ENCODE measurements at regions of chr1 and their contacts with region 1.

Region 1: DNA sequence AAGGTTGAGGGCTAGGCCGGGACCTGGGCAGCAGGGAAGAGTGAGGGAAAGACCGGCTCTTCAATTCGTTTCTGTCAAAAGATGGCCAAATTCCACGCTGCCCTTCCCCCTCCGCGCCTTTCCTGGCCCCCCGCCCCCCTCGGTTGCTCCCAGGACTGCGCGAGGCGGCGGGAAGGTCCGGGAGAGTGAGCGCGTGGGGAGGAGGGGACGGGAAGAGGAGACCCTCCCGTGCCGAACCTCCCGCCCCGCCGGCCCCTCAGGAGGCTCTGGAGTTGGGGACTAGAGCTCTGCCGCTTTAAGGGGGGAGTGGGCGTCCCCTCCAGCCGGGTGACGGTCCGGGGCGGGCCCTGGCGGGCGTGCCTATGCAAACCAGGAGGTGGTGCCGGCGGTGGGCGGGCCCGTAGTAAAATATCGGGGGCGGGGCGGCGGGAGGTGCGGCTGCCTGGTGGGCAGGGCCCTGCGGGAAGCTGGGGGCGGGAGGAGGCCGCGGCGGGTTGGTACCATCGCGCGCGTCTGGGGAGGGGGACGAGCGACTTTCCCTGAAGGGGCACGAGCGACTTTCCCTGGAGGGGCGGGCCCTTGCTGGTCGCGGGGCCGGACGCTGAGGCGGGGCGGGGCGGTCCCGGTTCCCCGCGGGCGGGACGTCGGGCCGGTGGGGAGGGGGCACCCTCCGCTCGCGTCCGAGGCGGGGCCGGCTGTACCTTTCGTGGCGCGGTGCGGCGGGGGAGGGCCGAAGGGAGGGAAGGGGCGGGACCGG is 58.2 kb downstream of the BCL9 start:
- H3K4me3 ChIP-seq: peak overlapping the region; percentile 73
- H3K27ac ChIP-seq: peak overlapping the region; percentile 40; the same call in 1 of the 2 replicates
- H3K4me1 ChIP-seq: no peaks in the 10 kb centered on the region
- CTCF ChIP-seq: no peak

Region 2: GRCh38 chr1:147472966-147473734 is 126.4 kb before region 1 on chr1:
- CTCF ChIA-PET with region 1: no interaction called
- POLR2A ChIA-PET with region 1: no interaction called
- H3K4me3 ChIP-seq: no peak overlapping the region
- H3K27ac ChIP-seq: no peak overlapping the region
- H3K4me1 ChIP-seq: no peaks in the 10 kb centered on the region
- CTCF ChIP-seq: no peak

Region 3: GRCh38 chr1:147541672-147542568 is 57.6 kb before region 1 on chr1:
- CTCF ChIA-PET with region 1: no interaction called
- POLR2A ChIA-PET with region 1: interaction called, 41 read pairs
- H3K4me3 ChIP-seq: peak overlapping the region; percentile 71
- H3K27ac ChIP-seq: peak overlapping the region; percentile 71
- H3K4me1 ChIP-seq: peaks cover 20% of the 10 kb centered on the region
- CTCF ChIP-seq: no peak

Region 4: DNA sequence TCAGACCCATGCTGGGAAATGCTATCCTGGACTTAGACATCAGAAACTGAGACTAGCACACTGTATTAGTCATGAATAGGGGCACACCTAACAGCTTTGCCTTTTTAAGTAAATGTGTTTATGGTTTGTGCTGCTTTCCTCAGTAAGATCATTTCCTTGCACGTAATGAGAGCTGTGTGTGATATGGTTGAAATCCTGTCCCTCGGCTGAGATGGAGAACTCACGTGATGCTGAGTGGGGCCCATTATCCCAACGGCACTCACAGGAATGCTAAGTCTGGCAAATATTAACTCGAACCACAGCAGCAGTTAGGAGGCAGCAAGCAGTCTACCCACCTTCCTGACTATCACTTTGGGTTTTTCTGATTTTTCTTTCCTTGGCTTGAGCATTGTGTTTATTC is 20.0 kb before region 1 on chr1:
- CTCF ChIA-PET with region 1: no interaction called
- POLR2A ChIA-PET with region 1: interaction called, 13 read pairs
- H3K4me3 ChIP-seq: no peak overlapping the region
- H3K27ac ChIP-seq: no peak overlapping the region
- H3K4me1 ChIP-seq: peaks cover 11% of the 10 kb centered on the region
- CTCF ChIP-seq: no peak

Measured in HEK293 (cell line).